Activated T-helper 2 cell treated with anti-CD3 and anti-CD28 coated beads, Interferon-gamma antibody, Interleukin-2, Interleukin-4, amounts not matched to agents 10 μg/mL and 5 μg/mL and 100 μg/mL, durations not matched to agents 14 hours and 24 hours and 36 hours (primary cell): ENCODE measurements at regions of chr13 and their contacts with region 1.

Region 1: GRCh38 chr13:48532506-48533499 is at the start of gene RCBTB2:
- DNase-seq: peak; percentile 99
- H3K4me3 Mint-ChIP-seq: peak within 1 kb of the TSS; percentile 90
- H3K27ac Mint-ChIP-seq: peak within 1 kb of the TSS; percentile 89
- H3K4me1 Mint-ChIP-seq: peaks cover 28% of the 10 kb centered on the region
- H3K27me3 Mint-ChIP-seq: peaks cover 2% of the 10 kb centered on the region
- total RNA-seq, gene RCBTB2: 2.7 and 3.4 TPM in 2 replicates

Region 2: DNA sequence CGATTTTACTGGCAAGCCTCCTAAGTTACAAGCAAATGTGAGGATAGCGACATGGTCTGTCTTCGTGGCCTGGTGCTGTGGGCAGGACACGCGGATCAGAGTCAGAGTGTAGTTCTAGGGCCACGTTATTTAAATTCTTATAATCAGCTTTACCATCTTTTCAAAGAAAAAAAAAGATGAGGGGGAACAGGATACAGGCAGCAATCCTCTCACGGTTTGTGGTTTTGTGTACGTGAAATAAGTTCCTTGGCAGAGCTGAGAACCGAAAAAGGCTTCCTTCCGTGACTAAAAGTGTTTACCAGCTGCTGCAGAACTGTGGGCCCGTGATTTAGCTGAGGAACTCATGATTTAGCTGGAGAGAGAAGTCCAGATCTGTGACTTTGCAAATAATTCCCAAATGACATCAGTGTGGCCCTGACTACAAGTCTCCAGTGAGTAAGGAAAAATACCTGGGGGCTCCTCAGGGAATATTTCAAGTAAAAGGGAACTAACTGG is 27.2 kb before region 1 on chr13:
- intact Hi-C with region 1: loop called (anchors 1 kb)
- DNase-seq: peak; percentile 64
- H3K4me3 Mint-ChIP-seq: peak overlapping the region; percentile 30
- H3K27ac Mint-ChIP-seq: peak overlapping the region; percentile 73
- H3K4me1 Mint-ChIP-seq: peaks cover 75% of the 10 kb centered on the region
- H3K27me3 Mint-ChIP-seq: peaks cover 4% of the 10 kb centered on the region

Region 3: GRCh38 chr13:48580185-48580803 is 47.5 kb after region 1 on chr13:
- intact Hi-C with region 1: no loop called
- DNase-seq: peak; percentile 39
- H3K4me3 Mint-ChIP-seq: no peak overlapping the region
- H3K27ac Mint-ChIP-seq: no peak overlapping the region
- H3K4me1 Mint-ChIP-seq: peaks cover 33% of the 10 kb centered on the region
- H3K27me3 Mint-ChIP-seq: peaks cover 61% of the 10 kb centered on the region